T-cell (primary cell): ENCODE measurements at regions of chr10 and their contacts with region 1.

Region 1: GRCh38 chr10:14837757-14838581 is at the starts of genes CDNF, HSPA14 and MSANTD7:
- DNase-seq: peak; percentile 97 to 100 (median 99)
- ATAC-seq: peak; percentile 93 to 96 (median 95)
- H3K4me3 ChIP-seq: peak within 1 kb of the TSS; percentile 97 to 100
- H3K4me3 Mint-ChIP-seq: peak within 1 kb of the TSS; percentile 88 to 97 (median 92)
- H3K27ac ChIP-seq: peak within 1 kb of the TSS; percentile 92
- H3K27ac Mint-ChIP-seq: peak within 1 kb of the TSS; percentile 95 to 96
- H3K4me1 ChIP-seq: peaks cover 11 to 26% of the 10 kb centered on the region in 2 experiments
- H3K4me1 Mint-ChIP-seq: peaks cover 27 to 35% (median 33%) of the 10 kb centered on the region in 3 donors
- H3K27me3 ChIP-seq: no peaks in the 10 kb centered on the region
- H3K27me3 Mint-ChIP-seq: no peaks in the 10 kb centered on the region
- total RNA-seq, gene CDNF: 1.5 to 4.0 (median 2.5) TPM
- total RNA-seq, gene HSPA14: 13.0 to 19.5 (median 15.0) TPM
- total RNA-seq, gene MSANTD7: 11.7 to 31.5 (median 14.9) TPM

Region 2: GRCh38 chr10:14801723-14802122 is 36.2 kb before region 1 on chr10:
- CTCF ChIA-PET with region 1: no interaction called
- POLR2A ChIA-PET with region 1: no interaction called
- DNase-seq: no peak
- ATAC-seq: no peak
- H3K4me3 ChIP-seq: no peak overlapping the region
- H3K4me3 Mint-ChIP-seq: no peak overlapping the region
- H3K27ac ChIP-seq: no peak overlapping the region
- H3K27ac Mint-ChIP-seq: no peak overlapping the region
- H3K4me1 ChIP-seq: no peaks in the 10 kb centered on the region
- H3K4me1 Mint-ChIP-seq: peaks cover 0 to 3% (median 0%) of the 10 kb centered on the region in 3 donors
- H3K27me3 ChIP-seq: no peaks in the 10 kb centered on the region
- H3K27me3 Mint-ChIP-seq: no peaks in the 10 kb centered on the region

Region 3: GRCh38 chr10:14878266-14879054 is 40.5 kb after region 1 on chr10 and contains the start of gene SUV39H2:
- CTCF ChIA-PET with region 1: interaction called in 1 of 2 experiments, 13 read pairs
- POLR2A ChIA-PET with region 1: interaction called in 1 of 2 experiments, 13 read pairs
- DNase-seq: peak; percentile 70 to 95 (median 81)
- ATAC-seq: peak; percentile 89 to 93 (median 93)
- H3K4me3 ChIP-seq: peak within 1 kb of the TSS; percentile 89 to 98
- H3K4me3 Mint-ChIP-seq: peak within 1 kb of the TSS; percentile 92 to 93 (median 92)
- H3K27ac ChIP-seq: peak within 1 kb of the TSS; percentile 40
- H3K27ac Mint-ChIP-seq: peak within 1 kb of the TSS; percentile 74 to 82
- H3K4me1 ChIP-seq: peaks cover 5 to 14% of the 10 kb centered on the region in 2 experiments
- H3K4me1 Mint-ChIP-seq: peaks cover 31 to 40% (median 35%) of the 10 kb centered on the region in 3 donors
- H3K27me3 ChIP-seq: no peaks in the 10 kb centered on the region
- H3K27me3 Mint-ChIP-seq: no peaks in the 10 kb centered on the region
- total RNA-seq, gene SUV39H2: 2.4 to 5.1 (median 3.4) TPM